ENCODE measurements at regions of chr3 and their contacts with region 1.

Region 1: GRCh38 chr3:4350789-4351163 is 47.6 kb downstream of the SETMAR start:
- DNase-seq: peak; percentile 37
- H3K4me3 Mint-ChIP-seq: peak overlapping the region; percentile 9
- H3K27ac Mint-ChIP-seq: peak overlapping the region; percentile 31
- H3K4me1 Mint-ChIP-seq: peaks cover 20% of the 10 kb centered on the region
- H3K27me3 Mint-ChIP-seq: peaks cover 4% of the 10 kb centered on the region

Region 2: DNA sequence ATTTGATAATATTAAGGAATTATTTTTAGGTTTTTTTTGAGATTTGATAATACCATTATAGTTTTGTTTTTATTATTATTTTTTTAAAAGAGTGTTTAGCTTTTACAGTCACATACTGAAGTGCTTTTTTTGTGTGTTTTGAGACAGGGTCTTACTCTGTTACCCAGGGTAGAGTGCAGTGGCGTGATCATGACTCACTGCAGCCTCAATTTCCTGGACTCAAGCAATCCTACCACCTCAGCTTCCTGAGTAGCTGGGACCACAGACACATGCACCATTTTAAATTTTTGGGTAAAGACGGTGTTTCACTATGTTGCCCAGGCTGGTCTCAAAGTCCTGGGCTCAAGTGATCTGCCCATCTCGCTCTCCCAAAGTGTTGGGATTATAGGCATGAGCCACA is 43.3 kb after region 1 on chr3:
- intact Hi-C with region 1: loop called (anchors 2 kb)
- DNase-seq: peak; percentile 13
- H3K4me3 Mint-ChIP-seq: peak overlapping the region; percentile 22
- H3K27ac Mint-ChIP-seq: peak overlapping the region; percentile 78
- H3K4me1 Mint-ChIP-seq: peaks cover 57% of the 10 kb centered on the region
- H3K27me3 Mint-ChIP-seq: peaks cover 1% of the 10 kb centered on the region

Region 3: DNA sequence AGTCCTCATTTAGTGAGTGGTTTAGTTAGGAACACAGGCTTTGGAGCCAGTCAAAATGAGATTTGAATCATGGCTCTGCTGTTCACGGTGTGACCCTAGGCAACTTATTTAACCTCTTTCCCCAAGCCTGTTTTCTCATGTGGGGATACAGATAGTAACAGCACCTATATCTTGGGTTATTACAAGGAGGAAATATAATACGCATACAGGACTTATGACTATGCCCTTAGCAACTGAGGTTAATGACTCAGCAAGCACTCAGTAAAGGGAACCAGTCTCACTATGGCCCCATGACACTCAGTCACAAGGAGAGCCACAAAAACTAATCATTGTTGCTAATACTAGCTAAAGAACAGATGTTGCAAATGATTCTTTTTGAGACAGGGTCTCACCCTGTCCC is 70.3 kb after region 1 on chr3:
- intact Hi-C with region 1: loop called (anchors 1 kb)
- DNase-seq: no peak
- H3K4me3 Mint-ChIP-seq: peak overlapping the region; percentile 25
- H3K27ac Mint-ChIP-seq: peak overlapping the region; percentile 57
- H3K4me1 Mint-ChIP-seq: peaks cover 25% of the 10 kb centered on the region
- H3K27me3 Mint-ChIP-seq: no peaks in the 10 kb centered on the region

Region 4: GRCh38 chr3:4474683-4475490 is 124.1 kb after region 1 on chr3:
- intact Hi-C with region 1: loop called (anchors 1 kb)
- DNase-seq: peak; percentile 9
- H3K4me3 Mint-ChIP-seq: peak overlapping the region; percentile 8
- H3K27ac Mint-ChIP-seq: peak overlapping the region; percentile 62
- H3K4me1 Mint-ChIP-seq: peaks cover 17% of the 10 kb centered on the region
- H3K27me3 Mint-ChIP-seq: peaks cover 22% of the 10 kb centered on the region

Region 5: DNA sequence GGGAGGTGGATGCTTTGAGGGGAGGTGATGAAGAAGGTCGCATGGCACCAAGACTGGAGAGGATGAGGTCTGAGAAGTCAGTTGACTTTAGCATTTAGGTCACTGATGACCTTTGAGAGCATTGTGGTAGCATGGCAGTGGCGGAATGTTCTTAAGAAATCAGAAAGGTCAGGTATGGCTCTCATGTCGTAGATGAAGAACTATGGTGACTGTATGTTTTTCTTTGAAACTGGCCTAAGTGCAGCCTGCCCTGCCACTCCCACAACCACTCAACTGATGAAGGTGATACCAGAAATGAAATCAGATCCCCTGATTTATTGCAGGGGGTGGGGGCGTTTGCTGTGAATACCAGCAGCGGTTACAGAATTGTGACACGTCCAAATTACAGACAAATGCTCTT is 244.9 kb after region 1 on chr3:
- intact Hi-C with region 1: no loop called
- DNase-seq: no peak
- H3K4me3 Mint-ChIP-seq: no peak overlapping the region
- H3K27ac Mint-ChIP-seq: no peak overlapping the region
- H3K4me1 Mint-ChIP-seq: peaks cover 15% of the 10 kb centered on the region
- H3K27me3 Mint-ChIP-seq: no peaks in the 10 kb centered on the region

Region 6: GRCh38 chr3:4633078-4634004 is 282.6 kb after region 1 on chr3:
- intact Hi-C with region 1: loop called (anchors 1 kb)
- DNase-seq: no peak
- H3K4me3 Mint-ChIP-seq: no peak overlapping the region
- H3K27ac Mint-ChIP-seq: peak overlapping the region; percentile 6
- H3K4me1 Mint-ChIP-seq: peaks cover 8% of the 10 kb centered on the region
- H3K27me3 Mint-ChIP-seq: no peaks in the 10 kb centered on the region